SK-N-SH (cell line): ENCODE measurements at regions of chr1 and their contacts with region 1.

Region 1: DNA sequence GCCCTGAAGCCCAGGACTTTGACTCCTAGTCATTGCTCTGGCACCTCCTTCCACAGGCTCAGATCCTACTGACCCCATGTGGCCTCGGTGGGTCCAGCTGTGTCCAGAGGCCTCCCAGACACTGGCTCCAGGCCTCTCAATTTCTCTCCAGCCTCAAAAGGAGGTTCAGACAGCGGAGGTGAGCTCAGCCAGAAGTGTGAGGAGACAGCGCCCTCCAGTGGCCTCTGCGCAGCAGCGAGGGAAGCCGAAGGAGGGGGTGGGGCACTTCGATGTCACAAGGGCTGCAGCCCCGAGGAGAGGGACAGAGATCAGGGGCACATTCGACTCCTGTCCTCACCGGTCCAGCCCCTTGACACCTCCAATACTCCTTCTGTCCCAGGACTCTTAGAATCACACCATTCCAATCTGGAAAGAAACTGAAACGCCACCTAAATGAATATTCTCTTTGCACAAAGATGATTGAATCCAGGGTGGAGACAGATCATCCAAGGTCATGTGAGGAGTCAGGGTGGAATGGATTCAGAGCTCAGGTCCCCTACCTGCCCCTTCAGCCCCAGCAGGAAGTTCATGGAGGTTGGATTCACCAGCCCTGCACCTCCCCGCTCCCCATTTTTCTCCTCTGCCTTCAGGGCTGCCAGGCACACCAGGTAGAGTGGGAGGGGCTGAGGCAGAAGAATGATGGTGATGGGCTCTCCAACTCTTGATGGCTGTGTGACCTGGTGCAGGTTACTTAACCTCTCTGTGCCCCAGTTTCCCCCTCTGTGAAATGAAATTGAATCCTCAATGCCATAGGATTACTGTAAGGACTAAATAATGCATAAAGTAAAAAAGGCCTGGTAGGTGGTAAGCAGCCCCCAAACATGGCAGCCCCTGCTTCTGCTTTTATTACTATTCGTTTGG is 34.8 kb upstream of the ZBTB40 start:
- DNase-seq: peak; percentile 84
- H3K4me3 ChIP-seq: 0 out of 4 replicates have a peak overlapping the region, but pooled peaks have one; percentile 9 to 45
- H3K27ac ChIP-seq: no peak overlapping the region; a peak in 1 of 4 replicates
- H3K4me1 ChIP-seq: peaks cover 7 to 26% of the 10 kb centered on the region in 2 experiments; a peak in 2 of 4 replicates
- H3K27me3 ChIP-seq: no peaks in the 10 kb centered on the region
- CTCF ChIP-seq: peak; percentile 97
- EP300 ChIP-seq: no peak
- RAD21 ChIP-seq: peak; percentile 98

Region 2: DNA sequence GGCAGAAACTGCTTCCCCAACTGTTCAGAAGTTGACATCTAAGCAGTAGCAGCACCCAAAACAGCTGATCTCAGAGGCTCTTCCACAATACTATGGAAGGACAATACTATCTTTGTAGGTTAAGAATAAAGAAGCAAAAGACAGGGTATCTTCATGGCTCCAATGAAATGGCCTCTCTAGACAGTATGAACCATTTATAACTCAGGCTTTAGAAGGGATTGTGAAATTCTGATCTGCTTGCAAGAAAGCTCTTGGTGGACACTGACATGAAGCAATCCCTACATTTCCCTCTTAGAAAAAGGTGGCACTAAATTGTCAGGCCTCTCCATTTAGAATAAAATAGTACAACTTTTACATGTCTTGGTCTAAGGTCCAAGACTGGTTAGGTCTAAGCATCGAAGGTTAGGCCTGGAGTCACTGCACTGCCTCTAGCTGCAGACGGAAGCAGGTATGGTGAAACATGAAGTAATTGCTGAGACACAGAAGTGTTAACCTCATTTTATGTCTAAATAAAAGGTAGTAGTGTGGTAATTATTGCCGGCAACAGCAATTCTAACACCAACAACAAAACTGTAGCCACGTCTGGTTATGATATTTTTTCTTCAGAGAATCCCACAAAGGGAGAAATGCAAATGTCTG is 1579.1 kb before region 1 on chr1:
- CTCF ChIA-PET with region 1: no interaction called
- POLR2A ChIA-PET with region 1: no interaction called
- DNase-seq: no peak
- H3K4me3 ChIP-seq: no peak overlapping the region
- H3K27ac ChIP-seq: no peak overlapping the region
- H3K4me1 ChIP-seq: no peaks in the 10 kb centered on the region
- H3K27me3 ChIP-seq: no peaks in the 10 kb centered on the region
- CTCF ChIP-seq: no peak
- EP300 ChIP-seq: no peak
- RAD21 ChIP-seq: no peak

Region 3: DNA sequence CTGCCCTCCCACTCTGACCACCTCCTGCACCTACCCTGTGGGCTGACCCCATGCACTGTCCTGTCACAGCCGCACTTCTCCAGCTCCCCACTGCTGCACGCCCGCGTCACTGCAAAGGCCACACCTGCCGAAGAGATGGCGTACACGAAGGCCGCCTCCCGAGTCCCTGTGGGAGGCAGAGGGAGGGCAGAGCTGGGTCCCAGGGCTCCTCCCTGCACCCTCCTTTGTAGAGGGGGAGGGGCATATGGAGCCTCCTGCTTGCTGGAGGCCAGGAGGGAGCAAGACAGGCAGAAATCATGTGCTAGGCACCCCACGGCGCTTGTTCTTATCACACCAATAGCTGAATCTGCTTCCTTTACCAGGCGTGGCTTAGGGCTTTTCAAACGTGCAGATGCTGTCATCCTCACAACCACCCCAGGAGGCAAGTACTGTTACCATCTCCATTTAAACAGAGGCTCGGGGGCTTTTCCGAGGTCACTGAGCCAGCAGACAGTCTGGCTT is 295.3 kb before region 1 on chr1:
- CTCF ChIA-PET with region 1: interaction called, 173 read pairs
- POLR2A ChIA-PET with region 1: interaction called, 3 read pairs
- DNase-seq: peak; percentile 81
- H3K4me3 ChIP-seq: no peak overlapping the region
- H3K27ac ChIP-seq: peak overlapping the region in 1 of 2 experiments; percentile 74; a peak in 2 of 4 replicates
- H3K4me1 ChIP-seq: peaks cover 0 to 40% of the 10 kb centered on the region in 2 experiments; a peak in 1 of 4 replicates
- H3K27me3 ChIP-seq: no peaks in the 10 kb centered on the region
- CTCF ChIP-seq: no peak
- EP300 ChIP-seq: 0 out of 4 replicates have a peak, but pooled peaks of 1 of the 2 experiments have one; percentile 17
- RAD21 ChIP-seq: no peak

Region 4: DNA sequence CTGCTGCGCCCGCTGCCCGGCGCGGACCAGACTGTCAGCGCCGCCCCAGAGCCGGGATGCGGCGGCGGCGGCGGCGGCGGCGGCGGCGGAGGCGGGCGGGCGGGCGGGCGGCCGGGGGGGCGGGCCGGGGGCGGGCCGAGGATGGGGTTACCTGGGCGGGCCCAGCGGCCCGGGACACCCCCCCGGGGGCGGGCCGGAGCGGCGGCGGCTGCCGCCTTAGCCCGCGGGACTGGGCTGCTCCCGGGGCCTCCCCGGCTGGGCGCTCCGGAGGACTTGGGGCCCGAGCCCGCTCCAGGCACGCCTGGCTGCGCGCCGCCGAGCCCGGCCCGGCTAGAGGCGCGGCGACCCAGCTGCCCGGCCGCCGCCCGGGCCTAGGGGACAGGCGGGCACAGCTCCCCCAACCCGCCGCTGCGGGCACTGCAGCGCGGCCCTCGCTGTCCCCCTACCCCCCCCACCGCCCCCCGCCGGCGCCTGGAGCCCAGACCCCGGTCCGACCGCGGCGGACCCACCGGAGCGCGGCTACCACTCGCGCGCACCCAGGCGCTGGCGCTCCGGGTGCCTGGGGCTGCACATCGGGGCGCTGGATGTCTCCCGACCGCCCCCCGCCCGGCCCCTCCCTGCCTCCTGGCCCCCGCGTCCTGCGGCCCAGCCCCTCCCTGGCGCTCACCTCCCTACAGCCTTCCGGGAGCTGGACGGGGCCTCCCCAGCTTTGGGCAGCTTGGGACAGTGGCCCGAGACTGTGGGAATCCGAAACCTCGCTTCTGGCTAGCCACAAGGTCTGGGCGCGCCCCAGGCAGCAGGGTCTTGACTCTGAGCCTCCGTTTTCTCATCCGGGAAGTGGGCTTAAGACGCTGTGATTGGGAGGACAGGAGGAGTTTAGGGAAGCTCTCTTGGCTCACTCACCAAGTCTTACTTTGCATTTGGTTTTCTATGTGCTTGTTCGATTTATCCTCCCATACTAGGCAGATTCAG is 273.5 kb before region 1 on chr1 and contains the start of gene WNT4:
- CTCF ChIA-PET with region 1: interaction called, 30 read pairs
- POLR2A ChIA-PET with region 1: no interaction called
- DNase-seq: peak; percentile 92
- H3K4me3 ChIP-seq: peak within 1 kb of the TSS; percentile 52 to 53
- H3K27ac ChIP-seq: no peak within 1 kb of the TSS
- H3K4me1 ChIP-seq: peaks cover 0 to 21% of the 10 kb centered on the region in 2 experiments; a peak in 1 of 4 replicates
- H3K27me3 ChIP-seq: peaks cover 5% of the 10 kb centered on the region; the same call in 1 of the 2 replicates
- CTCF ChIP-seq: no peak
- EP300 ChIP-seq: no peak
- RAD21 ChIP-seq: no peak
- polyA plus RNA-seq, gene WNT4: 0.03 and 0.08 TPM in 2 replicates

Region 5: DNA sequence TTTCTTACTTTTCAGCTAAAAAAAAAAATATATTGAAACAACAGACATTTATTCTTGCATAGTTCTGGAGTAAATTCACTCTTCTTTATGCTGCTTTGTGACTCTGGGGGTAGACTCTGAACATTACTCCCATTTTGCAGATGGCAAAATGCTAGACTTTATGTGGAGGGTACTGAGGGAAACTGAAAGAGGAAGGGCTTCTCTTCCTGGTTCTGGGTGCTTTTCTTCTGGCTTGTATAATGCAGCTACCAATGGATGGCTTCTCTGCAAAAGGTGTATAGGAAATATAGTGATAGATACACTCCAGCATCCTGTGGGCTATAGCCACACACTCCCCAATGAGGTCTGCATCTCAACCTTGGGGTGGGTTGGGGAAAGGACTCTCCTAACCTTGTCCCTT is 15.2 kb after region 1 on chr1:
- CTCF ChIA-PET with region 1: interaction called, 19 read pairs
- POLR2A ChIA-PET with region 1: no interaction called
- DNase-seq: no peak
- H3K4me3 ChIP-seq: no peak overlapping the region
- H3K27ac ChIP-seq: no peak overlapping the region
- H3K4me1 ChIP-seq: no peaks in the 10 kb centered on the region
- H3K27me3 ChIP-seq: 0 out of 2 replicates have a peak, but pooled peaks cover 5% of the 10 kb centered on the region
- CTCF ChIP-seq: no peak
- EP300 ChIP-seq: no peak
- RAD21 ChIP-seq: no peak

Region 6: GRCh38 chr1:22636353-22636752 is 219.5 kb after region 1 on chr1 and contains the start of gene C1QA:
- CTCF ChIA-PET with region 1: interaction called, 176 read pairs
- POLR2A ChIA-PET with region 1: no interaction called
- DNase-seq: no peak
- H3K4me3 ChIP-seq: no peak within 1 kb of the TSS
- H3K27ac ChIP-seq: no peak within 1 kb of the TSS
- H3K4me1 ChIP-seq: no peaks in the 10 kb centered on the region
- H3K27me3 ChIP-seq: peaks cover 21% of the 10 kb centered on the region
- CTCF ChIP-seq: no peak
- EP300 ChIP-seq: no peak
- RAD21 ChIP-seq: no peak
- polyA plus RNA-seq, gene C1QA: not detected in 2 replicates